Activated CD8-positive, alpha-beta T cell treated with anti-CD3 and anti-CD28 coated beads for 36 hours (primary cell): ENCODE measurements at regions of chr5 and their contacts with region 1.

Region 1: DNA sequence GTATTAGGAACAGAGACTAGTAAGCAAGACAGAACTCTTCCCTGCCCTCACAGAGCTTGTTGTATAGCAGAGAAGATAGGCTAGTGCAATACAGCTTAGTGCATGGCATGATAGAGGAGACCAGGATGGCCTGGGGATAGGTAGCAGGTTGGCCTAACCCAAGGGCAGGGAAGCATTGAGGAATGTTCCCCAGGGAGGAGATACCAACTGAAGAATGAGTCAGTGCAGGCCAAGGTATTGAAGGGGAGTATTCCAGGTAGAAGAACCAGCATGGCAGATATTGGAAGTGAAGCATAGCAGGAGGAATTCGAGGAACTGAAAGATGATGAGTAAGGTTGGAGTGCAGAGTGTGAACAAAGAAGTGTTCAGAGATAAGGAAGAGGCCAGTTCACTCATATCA is 138.6 kb upstream of the DHFR start:
- DNase-seq: no peak
- ATAC-seq: no peak
- H3K4me3 Mint-ChIP-seq: no peak overlapping the region
- H3K27ac Mint-ChIP-seq: no peak overlapping the region
- H3K4me1 Mint-ChIP-seq: peaks cover 11% of the 10 kb centered on the region
- H3K27me3 Mint-ChIP-seq: no peaks in the 10 kb centered on the region
- CTCF ChIP-seq: no peak

Region 2: DNA sequence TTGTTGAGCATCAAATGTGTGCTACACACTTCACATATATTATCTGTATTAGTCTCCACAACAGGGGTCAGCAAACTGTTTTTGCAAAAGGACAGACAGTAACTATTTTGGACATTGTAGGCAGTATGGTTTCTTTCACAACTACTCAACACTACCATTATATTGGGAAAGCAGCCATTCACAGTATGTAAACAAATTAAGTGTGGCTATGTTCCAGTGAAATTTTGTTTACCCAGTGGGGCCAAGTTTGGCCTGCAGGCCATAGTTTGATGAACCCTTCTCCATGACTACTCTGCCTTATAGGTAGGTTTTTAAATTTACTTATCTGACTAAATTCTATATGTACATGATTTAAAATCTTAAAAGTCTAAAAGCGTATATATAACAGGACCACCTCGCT is 318.4 kb before region 1 on chr5:
- CTCF ChIA-PET with region 1: no interaction called
- POLR2A ChIA-PET with region 1: no interaction called
- intact Hi-C with region 1: no loop called
- DNase-seq: no peak
- ATAC-seq: no peak
- H3K4me3 Mint-ChIP-seq: no peak overlapping the region
- H3K27ac Mint-ChIP-seq: no peak overlapping the region
- H3K4me1 Mint-ChIP-seq: no peaks in the 10 kb centered on the region
- H3K27me3 Mint-ChIP-seq: no peaks in the 10 kb centered on the region
- CTCF ChIP-seq: no peak

Region 3: DNA sequence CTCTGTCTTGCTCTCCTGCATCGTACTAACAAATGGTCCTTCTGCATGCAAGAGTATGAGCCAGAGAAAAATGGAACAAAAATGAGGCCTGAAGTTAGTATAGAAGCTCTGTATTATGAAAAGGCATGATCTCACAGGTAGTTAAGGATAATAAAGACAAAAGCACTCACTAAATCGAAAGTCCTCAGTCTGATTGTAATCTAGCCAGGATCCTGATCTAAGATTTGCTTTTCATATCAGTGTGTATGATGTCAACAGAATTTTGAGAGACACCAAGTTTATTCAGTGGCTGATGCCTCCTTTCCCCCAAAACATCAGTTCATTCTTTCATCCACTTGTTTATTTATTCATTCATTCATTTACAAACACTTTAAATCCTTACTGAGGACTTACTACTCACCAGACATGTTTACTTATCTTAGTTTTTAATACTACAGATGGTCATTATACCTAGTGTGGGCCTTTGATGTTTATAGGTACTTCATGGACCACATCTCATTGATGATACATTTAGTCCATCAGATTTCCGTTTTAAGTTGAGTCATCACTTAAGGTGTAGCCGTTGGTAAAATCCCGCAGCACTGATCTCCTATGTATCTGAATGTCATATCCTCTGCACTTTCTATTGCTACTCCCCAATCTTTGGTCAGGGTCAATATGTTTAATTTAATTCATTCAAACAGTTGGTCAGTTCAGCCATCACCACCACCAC is 33.3 kb before region 1 on chr5:
- CTCF ChIA-PET with region 1: no interaction called
- POLR2A ChIA-PET with region 1: no interaction called
- intact Hi-C with region 1: loop called (anchors 2 kb)
- DNase-seq: no peak
- ATAC-seq: no peak
- H3K4me3 Mint-ChIP-seq: no peak overlapping the region
- H3K27ac Mint-ChIP-seq: peak overlapping the region; percentile 47
- H3K4me1 Mint-ChIP-seq: peaks cover 64% of the 10 kb centered on the region
- H3K27me3 Mint-ChIP-seq: no peaks in the 10 kb centered on the region
- CTCF ChIP-seq: no peak

Region 4: GRCh38 chr5:81884871-81885270 is 1091.5 kb after region 1 on chr5:
- CTCF ChIA-PET with region 1: no interaction called
- POLR2A ChIA-PET with region 1: no interaction called
- intact Hi-C with region 1: no loop called
- DNase-seq: no peak
- ATAC-seq: no peak
- H3K4me3 Mint-ChIP-seq: no peak overlapping the region
- H3K27ac Mint-ChIP-seq: no peak overlapping the region
- H3K4me1 Mint-ChIP-seq: no peaks in the 10 kb centered on the region
- H3K27me3 Mint-ChIP-seq: no peaks in the 10 kb centered on the region
- CTCF ChIP-seq: no peak